GM18951 (cell line): ENCODE measurements at regions of chr6 and their contacts with region 1.

Region 1: DNA sequence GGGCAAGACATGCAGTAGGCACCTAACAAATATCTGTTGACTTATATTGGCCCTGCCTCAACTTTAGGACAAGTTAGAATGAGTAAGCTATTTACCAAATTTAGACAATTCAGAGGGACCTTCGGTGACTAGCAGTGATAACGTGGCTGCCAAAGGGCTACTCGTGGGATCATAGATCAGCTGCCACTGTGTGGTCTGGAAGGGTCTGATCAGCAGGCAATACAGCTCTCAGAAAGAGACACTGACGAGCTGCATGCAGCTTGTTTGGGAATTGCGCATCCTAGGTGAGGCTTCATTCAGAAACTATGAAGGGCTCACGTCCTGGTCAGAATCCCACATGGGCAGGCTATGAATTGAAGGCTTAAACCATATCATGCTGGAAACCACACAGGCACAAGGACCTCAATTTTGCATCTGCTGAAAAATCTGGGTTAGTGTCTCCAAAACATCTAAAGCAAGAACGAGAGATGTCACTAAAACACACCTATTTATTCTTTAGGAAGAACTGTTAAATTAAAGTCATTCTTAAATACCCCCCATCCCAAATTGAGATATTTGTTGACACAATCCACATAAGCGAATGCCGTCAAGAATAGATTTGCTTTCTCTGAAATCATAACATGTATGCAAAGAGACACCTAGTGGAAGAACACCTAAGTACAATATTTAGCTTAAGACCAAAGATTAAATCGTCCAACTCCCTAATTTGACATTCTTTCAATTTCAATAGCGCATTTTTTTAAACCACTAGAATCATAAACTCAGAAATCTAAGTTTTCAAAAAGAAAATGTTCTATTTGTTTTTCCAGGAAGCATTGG is 79.6 kb downstream of the IPCEF1 start:
- POLR2A ChIP-seq: no peak

Region 2: GRCh38 chr6:154156135-154156896 is 120.7 kb before region 1 on chr6:
- in situ Hi-C with region 1: loop called (anchors 10 kb)
- POLR2A ChIP-seq: peak; percentile 18

Region 3: DNA sequence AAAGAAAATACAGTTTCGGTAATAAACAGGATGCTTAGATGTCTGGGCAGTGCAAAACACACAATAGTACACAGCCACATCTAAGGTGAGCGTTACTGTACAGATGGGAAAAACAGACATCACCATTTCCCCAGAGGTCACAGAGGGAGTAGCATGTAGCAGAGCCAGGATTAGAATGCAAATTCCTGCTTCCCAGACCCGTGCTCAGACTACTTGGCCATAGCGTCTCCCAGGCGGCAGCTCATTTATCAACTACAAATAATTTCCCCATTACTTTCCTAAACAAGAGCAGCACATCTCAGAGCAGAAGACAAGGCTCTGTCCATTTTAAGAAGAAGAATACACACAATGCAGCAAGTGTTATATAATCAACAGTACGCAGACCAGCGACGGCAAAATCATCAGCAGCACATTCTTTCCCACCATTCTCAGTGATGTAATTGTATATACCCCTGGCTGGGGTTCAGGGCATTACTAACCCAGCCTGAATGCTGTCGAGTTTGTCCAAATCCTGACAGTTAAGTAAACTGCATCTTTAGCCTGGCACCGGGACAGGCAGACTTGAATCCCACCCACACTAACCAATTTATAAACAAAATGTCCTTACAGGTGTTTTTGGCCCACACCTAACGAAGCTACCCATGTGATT is 171.6 kb after region 1 on chr6:
- in situ Hi-C with region 1: no loop called
- POLR2A ChIP-seq: no peak